Activated T-helper 1 cell treated with anti-CD3 and anti-CD28 coated beads, Interleukin-12 subunit alpha, Interleukin-12 subunit beta, Interleukin-2, Interleukin-4 antibody, amounts not matched to agents 30 ng/mL and 10 ng/mL and 1 ng/mL, durations not matched to agents 14 hours and 24 hours and 36 hours (primary cell): ENCODE measurements at regions of chr1 and their contacts with region 1.

Region 1: DNA sequence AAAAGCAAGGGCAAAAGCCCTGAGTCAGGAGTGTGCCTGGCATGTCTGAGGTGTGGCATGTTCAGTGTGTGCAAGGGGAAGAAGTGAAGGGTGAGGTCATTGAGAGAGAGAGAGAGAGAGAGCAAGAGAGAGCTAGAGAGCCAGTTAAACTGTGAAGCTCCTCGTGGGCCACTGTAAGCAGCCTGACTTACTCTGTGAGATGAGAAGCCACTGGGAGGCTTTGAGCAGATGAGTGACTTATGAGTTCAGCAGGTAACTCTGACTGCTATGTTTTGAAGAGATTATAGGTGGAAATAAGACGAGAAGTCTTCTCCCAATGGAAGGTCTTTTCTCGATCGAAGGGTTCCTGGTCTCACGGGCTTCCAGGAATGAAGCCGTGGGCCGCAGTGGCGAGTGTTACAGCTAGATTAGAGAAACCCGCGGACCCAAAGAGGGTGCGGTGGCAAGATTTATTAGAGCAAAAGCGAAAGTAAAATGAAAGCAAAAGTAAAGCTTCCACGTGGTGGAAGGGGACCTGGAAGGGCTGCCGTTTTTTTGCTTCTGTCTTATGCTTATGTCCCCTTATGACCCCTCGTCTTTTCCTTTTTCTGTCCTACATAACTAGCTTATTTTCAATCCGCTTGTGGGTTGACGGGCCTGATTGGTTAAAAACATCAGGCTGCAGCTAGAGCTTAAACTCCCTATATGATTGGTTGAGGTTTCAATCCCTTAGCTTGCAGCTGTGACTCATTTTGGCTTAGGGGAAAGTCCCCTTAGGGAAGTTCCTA is 323.1 kb upstream of the FAM78B start:
- DNase-seq: peak; percentile 40
- H3K4me3 Mint-ChIP-seq: no peak overlapping the region
- H3K27ac Mint-ChIP-seq: no peak overlapping the region
- H3K4me1 Mint-ChIP-seq: peaks cover 15% of the 10 kb centered on the region
- H3K27me3 Mint-ChIP-seq: no peaks in the 10 kb centered on the region

Region 2: DNA sequence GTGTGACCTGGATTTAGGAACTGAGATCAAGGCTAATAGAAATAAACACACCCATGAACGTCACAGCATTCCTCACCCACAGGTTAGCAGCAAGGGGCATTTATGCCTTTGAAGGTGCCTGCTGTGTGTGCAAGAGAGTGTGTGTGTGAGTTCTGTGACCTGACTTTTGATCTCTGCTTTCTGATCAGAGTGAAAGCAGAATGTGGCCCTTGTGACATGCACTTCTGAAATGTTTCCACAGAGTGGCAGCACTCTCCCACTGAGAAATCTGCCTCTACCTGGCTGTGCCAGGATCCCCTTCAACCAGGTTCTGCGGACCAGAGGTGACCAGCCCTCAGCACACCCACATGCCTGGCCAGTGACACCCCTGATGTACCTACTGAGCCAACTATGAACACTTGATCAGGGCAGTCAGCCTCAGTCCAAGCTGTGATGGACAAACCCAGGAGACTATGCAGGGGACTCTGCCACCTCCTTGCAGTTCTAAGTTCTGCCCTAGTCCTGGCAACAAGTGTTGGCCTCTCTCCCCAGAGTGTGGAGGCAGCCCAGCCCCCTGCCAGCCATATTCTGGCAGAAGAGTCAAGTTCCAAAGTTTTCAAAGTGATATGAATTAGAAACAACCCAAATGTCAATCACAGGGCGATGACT is 1085.9 kb before region 1 on chr1:
- intact Hi-C with region 1: loop called (anchors 5 kb)
- DNase-seq: peak; percentile 21
- H3K4me3 Mint-ChIP-seq: no peak overlapping the region
- H3K27ac Mint-ChIP-seq: no peak overlapping the region
- H3K4me1 Mint-ChIP-seq: peaks cover 4% of the 10 kb centered on the region
- H3K27me3 Mint-ChIP-seq: peaks cover 45% of the 10 kb centered on the region

Region 3: DNA sequence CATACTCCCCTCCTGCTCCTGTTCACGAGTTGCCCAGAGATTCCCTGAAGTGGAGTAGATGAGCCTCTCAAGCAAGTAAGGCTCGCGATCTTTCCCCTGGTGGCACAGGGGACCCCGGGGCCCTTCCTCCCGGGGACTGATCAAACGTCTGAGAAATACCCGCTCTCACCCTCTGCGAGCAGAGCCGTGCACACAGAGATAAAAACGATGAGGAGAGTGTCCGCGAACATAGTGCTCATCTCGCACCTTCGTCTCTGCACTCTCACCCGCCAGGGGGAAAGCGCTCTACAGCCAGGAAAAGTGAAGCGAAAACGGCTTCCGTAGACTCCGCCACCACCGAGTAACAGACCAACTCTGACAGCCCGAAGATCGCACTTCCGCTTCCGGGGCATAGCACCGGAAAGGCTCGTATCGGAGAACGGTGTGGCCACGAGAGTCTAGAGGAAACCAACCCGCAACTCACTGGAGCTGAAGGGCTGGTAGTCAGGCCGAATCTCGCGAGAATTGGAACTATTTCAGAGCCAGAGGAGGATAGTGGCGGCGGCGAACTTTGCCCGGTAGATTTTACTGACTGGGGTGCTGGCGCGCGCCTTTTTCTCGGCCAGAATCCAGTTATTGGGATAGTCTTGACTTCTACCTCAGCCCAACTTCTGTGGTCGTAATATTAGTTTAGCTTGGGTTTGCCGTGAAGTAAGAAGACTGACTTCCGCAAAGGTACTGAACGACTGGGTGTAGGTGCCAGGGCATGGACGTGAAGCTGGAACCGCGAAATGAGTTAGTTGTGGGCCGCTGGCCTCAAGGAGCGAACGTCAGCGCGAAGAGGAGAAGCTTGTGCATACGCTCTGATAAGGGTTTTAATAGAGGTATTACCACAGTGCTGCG is 721.1 kb before region 1 on chr1 and contains the start of gene TMCO1:
- intact Hi-C with region 1: loop called (anchors 10 kb)
- DNase-seq: peak; percentile 94
- H3K4me3 Mint-ChIP-seq: peak within 1 kb of the TSS; percentile 99
- H3K27ac Mint-ChIP-seq: peak within 1 kb of the TSS; percentile 100
- H3K4me1 Mint-ChIP-seq: peaks cover 53% of the 10 kb centered on the region
- H3K27me3 Mint-ChIP-seq: no peaks in the 10 kb centered on the region
- total RNA-seq, gene TMCO1: 97.1 and 102 TPM in 2 replicates

Region 4: GRCh38 chr1:166069390-166069789 is 420.5 kb before region 1 on chr1:
- intact Hi-C with region 1: no loop called
- DNase-seq: no peak
- H3K4me3 Mint-ChIP-seq: no peak overlapping the region
- H3K27ac Mint-ChIP-seq: no peak overlapping the region
- H3K4me1 Mint-ChIP-seq: no peaks in the 10 kb centered on the region
- H3K27me3 Mint-ChIP-seq: peaks cover 3% of the 10 kb centered on the region

Region 5: GRCh38 chr1:166166695-166167571 is 322.9 kb before region 1 on chr1 and contains the start of gene FAM78B:
- intact Hi-C with region 1: loop called (anchors 2 kb)
- DNase-seq: peak; percentile 36
- H3K4me3 Mint-ChIP-seq: peak within 1 kb of the TSS; percentile 83
- H3K27ac Mint-ChIP-seq: no peak within 1 kb of the TSS
- H3K4me1 Mint-ChIP-seq: peaks cover 16% of the 10 kb centered on the region
- H3K27me3 Mint-ChIP-seq: peaks cover 39% of the 10 kb centered on the region
- total RNA-seq, gene FAM78B: 1.0 TPM in 2 replicates

Region 6: DNA sequence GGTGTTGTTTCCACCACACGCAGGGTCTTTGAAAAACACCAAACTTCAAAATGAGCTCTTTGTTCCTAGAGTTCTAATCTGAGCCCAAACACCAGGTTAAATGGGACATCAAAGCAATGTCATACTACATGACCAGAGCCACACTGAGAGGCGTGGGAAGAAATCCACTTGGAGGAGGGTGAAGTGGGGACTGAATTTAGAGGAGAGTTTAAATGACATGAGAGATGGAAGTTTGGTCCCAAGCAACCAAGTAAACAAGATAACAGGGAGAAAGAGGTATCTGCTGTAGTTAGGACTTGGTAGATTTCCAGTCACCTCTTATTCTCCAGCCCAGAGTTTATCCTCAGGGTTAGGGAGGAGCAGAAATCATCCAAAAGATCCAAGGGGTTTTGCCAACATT is 32.2 kb before region 1 on chr1:
- intact Hi-C with region 1: no loop called
- DNase-seq: no peak
- H3K4me3 Mint-ChIP-seq: no peak overlapping the region
- H3K27ac Mint-ChIP-seq: no peak overlapping the region
- H3K4me1 Mint-ChIP-seq: no peaks in the 10 kb centered on the region
- H3K27me3 Mint-ChIP-seq: peaks cover 4% of the 10 kb centered on the region

Region 7: GRCh38 chr1:166721145-166721544 is 231.3 kb after region 1 on chr1:
- intact Hi-C with region 1: no loop called
- DNase-seq: no peak
- H3K4me3 Mint-ChIP-seq: no peak overlapping the region
- H3K27ac Mint-ChIP-seq: no peak overlapping the region
- H3K4me1 Mint-ChIP-seq: no peaks in the 10 kb centered on the region
- H3K27me3 Mint-ChIP-seq: no peaks in the 10 kb centered on the region

Region 8: DNA sequence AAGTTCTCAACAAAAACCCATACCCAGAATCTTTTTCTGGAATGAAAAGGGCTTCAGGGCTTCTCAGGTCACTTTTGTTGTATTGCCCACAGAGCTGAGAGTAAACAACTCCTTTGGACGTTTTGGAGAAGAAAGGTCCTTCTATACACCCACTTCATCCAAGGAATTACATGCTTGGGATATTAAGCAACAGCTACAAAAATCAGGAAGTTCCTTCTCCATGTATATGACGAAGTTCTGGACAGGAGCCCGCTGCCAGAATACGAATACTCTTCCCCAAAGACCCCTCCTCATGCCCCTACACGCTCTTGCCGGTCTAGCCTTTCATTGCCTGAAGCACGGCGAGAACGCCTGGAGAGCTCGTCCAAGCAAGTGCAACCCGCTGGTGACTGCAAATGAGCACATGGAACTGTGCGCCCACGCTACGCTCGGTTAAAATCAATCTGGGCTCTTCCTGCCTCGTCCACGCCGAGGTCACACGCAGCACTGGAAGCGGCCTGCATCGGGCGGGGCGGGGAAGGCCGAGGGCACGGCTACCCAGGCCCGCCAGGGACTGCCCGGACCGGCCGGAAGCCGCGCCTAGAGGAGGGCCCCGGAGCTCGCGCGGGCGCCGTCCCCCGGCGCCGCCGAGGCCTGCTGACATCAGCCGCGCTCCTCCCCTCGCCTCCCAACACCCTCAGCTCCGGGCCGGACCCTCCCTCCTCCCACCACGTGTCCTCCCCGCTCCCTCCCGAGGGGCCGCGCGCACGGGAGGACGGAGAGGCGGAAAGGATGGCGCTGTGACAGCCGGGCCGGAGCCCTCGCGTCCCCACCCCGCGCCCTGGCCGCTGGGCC is 349.1 kb after region 1 on chr1 and contains the start of gene POGK:
- intact Hi-C with region 1: loop called (anchors 2 kb)
- DNase-seq: peak; percentile 84
- H3K4me3 Mint-ChIP-seq: peak within 1 kb of the TSS; percentile 94
- H3K27ac Mint-ChIP-seq: peak within 1 kb of the TSS; percentile 97
- H3K4me1 Mint-ChIP-seq: peaks cover 64% of the 10 kb centered on the region
- H3K27me3 Mint-ChIP-seq: no peaks in the 10 kb centered on the region
- total RNA-seq, gene POGK: 51.4 and 54.1 TPM in 2 replicates